ENCODE measurements at regions of chr16 and their contacts with region 1.

Region 1: DNA sequence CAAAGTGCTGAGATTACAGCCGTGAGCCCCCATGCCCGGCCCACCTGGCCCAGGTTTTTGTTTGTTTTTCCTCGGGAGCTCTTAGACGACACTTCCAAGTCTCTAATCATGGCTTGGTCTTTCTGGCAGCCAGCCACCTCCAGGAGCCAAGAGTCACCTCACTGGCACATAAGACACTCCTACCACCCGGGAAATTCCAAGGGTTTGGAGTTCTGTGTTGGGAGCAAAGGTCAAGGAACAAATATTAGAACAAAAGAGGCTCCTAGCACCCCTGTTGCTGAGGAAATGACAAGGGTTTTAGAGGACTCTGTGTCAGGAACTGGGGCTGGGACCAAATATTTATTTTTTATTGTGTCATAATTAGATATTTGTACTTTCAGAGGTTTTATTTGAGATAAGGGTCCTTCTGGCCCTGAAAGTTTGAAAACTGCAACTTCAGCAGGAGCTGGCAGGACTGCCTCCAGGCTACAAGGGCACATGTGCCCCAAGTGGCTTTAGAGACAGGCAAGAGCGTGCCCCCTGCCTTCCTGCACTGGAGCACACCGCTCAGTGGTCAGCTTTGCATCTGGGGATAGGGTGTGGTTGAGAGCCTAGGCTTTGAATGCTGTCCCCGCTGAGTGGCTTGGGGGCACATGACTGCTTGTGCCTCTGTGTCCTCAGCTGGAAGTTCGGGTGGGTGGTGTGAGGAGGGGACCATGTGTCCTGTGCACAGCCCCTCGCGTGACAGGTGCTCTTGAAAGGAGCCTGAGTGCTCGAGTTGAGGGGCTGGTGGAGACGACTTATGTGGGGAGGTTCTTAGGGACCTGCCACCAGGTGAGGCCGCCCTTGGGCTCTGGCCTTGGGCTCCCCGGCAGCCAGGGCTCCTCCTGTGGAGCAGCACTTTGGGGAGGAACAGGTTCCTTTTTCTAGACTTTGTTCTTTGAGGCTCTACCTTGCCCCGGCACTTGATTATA is 29.7 kb downstream of the MGRN1 start:
- DNase-seq: no peak
- ATAC-seq: no peak
- H3K4me3 ChIP-seq: no peak overlapping the region
- H3K27ac ChIP-seq: no peak overlapping the region
- H3K4me1 ChIP-seq: no peaks in the 10 kb centered on the region
- H3K27me3 ChIP-seq: no peaks in the 10 kb centered on the region

Region 2: GRCh38 chr16:4713663-4714501 is 59.6 kb after region 1 on chr16:
- intact Hi-C with region 1: loop called in 1 of 2 experiments (anchors 10 kb)
- DNase-seq: no peak
- ATAC-seq: no peak
- H3K4me3 ChIP-seq: no peak overlapping the region
- H3K27ac ChIP-seq: no peak overlapping the region
- H3K4me1 ChIP-seq: no peaks in the 10 kb centered on the region
- H3K27me3 ChIP-seq: no peaks in the 10 kb centered on the region

Measured in aorta (tissue), 5 donors.